Calu3 (cell line): ENCODE measurements at regions of chr13 and their contacts with region 1.

Region 1: DNA sequence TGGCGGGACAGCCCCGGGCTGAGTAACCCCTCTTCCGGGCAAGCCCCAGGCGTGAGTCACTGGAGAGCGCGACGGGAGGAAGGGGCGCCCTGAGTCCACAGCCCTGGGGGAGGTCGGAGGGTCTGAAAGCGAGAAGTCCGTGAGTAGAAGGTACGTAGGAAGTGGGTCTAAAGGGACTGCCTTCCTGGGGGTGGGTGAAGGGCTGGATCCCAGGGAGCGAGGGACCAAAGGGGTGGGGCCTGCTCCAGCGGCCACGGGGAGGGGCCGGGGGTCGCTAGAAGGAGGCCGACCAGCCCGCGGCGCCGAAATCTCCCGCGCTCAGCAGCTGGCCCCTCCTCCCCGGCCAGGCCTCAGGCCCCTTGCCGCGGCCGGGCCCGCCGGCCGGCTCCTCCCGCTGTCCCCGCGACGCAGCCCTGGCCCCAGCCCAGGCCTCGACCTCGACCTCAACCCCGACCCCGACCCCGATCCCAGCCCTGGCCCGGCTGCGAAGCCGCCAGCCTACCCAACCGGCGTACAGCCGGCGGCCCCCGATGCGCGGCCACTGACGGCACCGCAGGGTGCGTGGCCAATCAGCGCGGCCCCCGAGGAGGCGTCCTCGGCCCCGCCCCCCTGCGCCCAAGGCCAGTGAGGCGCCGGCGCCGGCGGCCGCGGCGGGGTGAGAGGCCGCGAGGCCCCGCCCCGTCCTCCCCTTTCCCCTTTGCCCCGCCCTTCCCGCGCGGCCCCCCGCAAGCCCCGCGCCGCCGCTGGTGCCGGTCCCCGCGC is 22.6 kb downstream of the IPO5 start:
- DNase-seq: peak; percentile 78
- H3K4me3 Mint-ChIP-seq: peak overlapping the region; percentile 86
- H3K27ac Mint-ChIP-seq: peak overlapping the region; percentile 53
- H3K4me1 Mint-ChIP-seq: no peaks in the 10 kb centered on the region
- H3K27me3 Mint-ChIP-seq: no peaks in the 10 kb centered on the region
- CTCF ChIP-seq: no peak

Region 2: DNA sequence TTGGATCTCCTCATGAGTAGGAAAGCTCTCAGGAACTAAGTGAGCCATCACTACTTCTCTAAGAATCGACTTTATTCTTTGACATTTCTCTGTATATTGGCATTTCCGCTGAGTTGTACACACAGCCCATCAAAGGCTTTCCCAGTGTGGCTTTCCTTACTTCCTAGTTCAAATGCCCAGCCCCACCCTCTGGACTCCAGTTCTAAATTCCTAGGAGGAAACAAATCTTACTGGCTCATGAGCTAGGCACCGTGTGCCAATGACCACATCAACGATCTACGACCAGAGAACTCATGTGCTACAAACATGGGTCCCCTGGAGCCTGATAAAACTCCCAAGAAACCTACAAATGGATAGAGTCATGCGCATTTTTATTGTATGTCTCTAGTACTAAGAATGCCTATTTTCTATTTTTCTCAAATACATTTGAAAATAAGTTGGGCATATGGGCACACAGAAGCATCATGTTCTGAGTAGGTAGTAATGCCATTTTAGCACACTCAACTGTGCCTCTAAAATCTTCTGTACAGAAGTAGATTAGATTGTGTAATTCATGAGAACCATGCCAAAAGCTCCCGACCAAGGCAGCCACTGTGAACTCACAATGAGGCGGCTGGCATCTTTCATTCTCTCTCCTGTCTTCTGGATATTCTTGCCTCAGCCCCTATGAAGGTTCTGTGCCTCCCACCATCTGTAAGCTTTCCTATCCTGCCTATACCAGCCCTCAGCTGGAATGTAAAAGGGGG is 552.6 kb before region 1 on chr13:
- CTCF ChIA-PET with region 1: no interaction called
- intact Hi-C with region 1: no loop called
- DNase-seq: no peak
- H3K4me3 Mint-ChIP-seq: no peak overlapping the region
- H3K27ac Mint-ChIP-seq: no peak overlapping the region
- H3K4me1 Mint-ChIP-seq: no peaks in the 10 kb centered on the region
- H3K27me3 Mint-ChIP-seq: no peaks in the 10 kb centered on the region
- CTCF ChIP-seq: no peak

Region 3: GRCh38 chr13:97855570-97856303 is 120.3 kb before region 1 on chr13:
- CTCF ChIA-PET with region 1: no interaction called
- intact Hi-C with region 1: loop called (anchors 10 kb)
- DNase-seq: peak; percentile 2
- H3K4me3 Mint-ChIP-seq: no peak overlapping the region
- H3K27ac Mint-ChIP-seq: no peak overlapping the region
- H3K4me1 Mint-ChIP-seq: peaks cover 10% of the 10 kb centered on the region
- H3K27me3 Mint-ChIP-seq: peaks cover 23% of the 10 kb centered on the region
- CTCF ChIP-seq: peak; percentile 29

Region 4: DNA sequence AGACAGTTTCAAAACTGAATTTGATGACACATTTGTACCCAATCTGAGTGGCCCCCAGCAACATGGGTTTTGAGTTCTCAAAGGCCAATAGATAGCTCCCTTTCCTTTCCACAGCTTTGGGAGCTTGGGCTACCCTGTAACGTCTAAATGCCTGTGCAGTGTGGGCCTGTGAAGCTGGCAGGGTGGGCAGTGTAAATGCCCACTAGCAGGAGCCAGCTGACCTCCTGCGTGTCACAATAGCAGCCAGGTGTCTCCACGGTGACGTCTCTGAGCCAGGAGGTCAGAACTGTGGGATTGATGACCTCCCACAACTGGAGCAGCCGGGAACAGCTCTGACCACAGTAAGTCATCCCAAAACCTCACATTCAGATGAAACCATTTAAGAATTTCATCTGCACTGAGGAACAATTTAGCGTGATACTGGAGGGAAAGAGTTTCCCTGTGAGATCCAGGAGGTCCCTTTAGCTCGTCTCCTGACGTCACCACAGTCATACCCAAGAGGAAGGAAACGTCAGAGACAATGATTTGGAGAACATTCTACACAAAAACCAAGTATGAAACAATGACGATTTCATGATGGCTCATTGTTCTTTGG is 22.6 kb before region 1 on chr13 and contains the start of gene IPO5:
- CTCF ChIA-PET with region 1: no interaction called
- intact Hi-C with region 1: no loop called
- DNase-seq: no peak
- H3K4me3 Mint-ChIP-seq: no peak within 1 kb of the TSS
- H3K27ac Mint-ChIP-seq: no peak within 1 kb of the TSS
- H3K4me1 Mint-ChIP-seq: no peaks in the 10 kb centered on the region
- H3K27me3 Mint-ChIP-seq: no peaks in the 10 kb centered on the region
- CTCF ChIP-seq: no peak
- total RNA-seq, gene IPO5: 46.3 and 52.2 TPM in 2 replicates